ENCODE measurements at regions of chr17 and their contacts with region 1.

Region 1: GRCh38 chr17:48457080-48457836 is 27.2 kb upstream of the SKAP1 start:
- DNase-seq: peak; percentile 93
- H3K4me3 Mint-ChIP-seq: peak overlapping the region; percentile 53
- H3K27ac Mint-ChIP-seq: peak overlapping the region; percentile 17
- H3K4me1 Mint-ChIP-seq: peaks cover 53% of the 10 kb centered on the region
- H3K27me3 Mint-ChIP-seq: no peaks in the 10 kb centered on the region

Region 2: GRCh38 chr17:48335858-48336500 is 121.3 kb before region 1 on chr17:
- intact Hi-C with region 1: loop called (anchors 2 kb)
- DNase-seq: peak; percentile 72
- H3K4me3 Mint-ChIP-seq: no peak overlapping the region
- H3K27ac Mint-ChIP-seq: no peak overlapping the region
- H3K4me1 Mint-ChIP-seq: peaks cover 12% of the 10 kb centered on the region
- H3K27me3 Mint-ChIP-seq: no peaks in the 10 kb centered on the region

Region 3: DNA sequence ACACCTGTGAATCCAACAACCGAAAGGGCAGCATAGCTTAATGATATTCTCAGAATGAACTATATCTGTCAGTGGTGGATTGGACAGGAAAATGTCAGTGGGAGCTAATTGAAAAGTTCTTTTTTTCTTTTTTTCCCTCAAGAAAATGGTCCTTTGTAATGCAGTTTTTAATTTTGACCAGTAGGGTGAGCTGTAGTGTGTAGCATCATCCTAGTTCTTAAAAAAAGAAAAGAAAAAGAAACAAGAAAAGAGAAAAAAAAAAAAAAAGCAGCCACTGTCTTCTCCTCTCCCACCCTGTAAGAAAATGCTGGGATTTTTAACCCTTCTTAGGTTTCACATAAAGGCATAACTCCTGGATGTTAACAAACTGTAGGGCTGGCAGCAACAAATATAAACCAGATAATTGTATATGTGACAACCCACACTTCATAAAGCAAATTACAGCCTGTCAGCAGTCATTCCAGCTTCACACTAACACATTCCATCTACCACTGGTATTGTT is 105.4 kb before region 1 on chr17:
- intact Hi-C with region 1: loop called (anchors 1 kb)
- DNase-seq: no peak
- H3K4me3 Mint-ChIP-seq: no peak overlapping the region
- H3K27ac Mint-ChIP-seq: no peak overlapping the region
- H3K4me1 Mint-ChIP-seq: peaks cover 6% of the 10 kb centered on the region
- H3K27me3 Mint-ChIP-seq: no peaks in the 10 kb centered on the region

Region 4: GRCh38 chr17:48429638-48430586 is 27.3 kb before region 1 on chr17 and contains the start of gene SKAP1:
- intact Hi-C with region 1: loop called (anchors 1 kb)
- DNase-seq: peak; percentile 93
- H3K4me3 Mint-ChIP-seq: peak within 1 kb of the TSS; percentile 99
- H3K27ac Mint-ChIP-seq: peak within 1 kb of the TSS; percentile 99
- H3K4me1 Mint-ChIP-seq: peaks cover 64% of the 10 kb centered on the region
- H3K27me3 Mint-ChIP-seq: no peaks in the 10 kb centered on the region
- total RNA-seq, gene SKAP1: 59.3 and 63.1 TPM in 2 replicates

Region 5: GRCh38 chr17:48441231-48441711 is 16.0 kb before region 1 on chr17:
- intact Hi-C with region 1: loop called (anchors 1 kb)
- DNase-seq: peak; percentile 86
- H3K4me3 Mint-ChIP-seq: peak overlapping the region; percentile 51
- H3K27ac Mint-ChIP-seq: peak overlapping the region; percentile 95
- H3K4me1 Mint-ChIP-seq: peaks cover 83% of the 10 kb centered on the region
- H3K27me3 Mint-ChIP-seq: no peaks in the 10 kb centered on the region

Measured in activated CD4-positive, alpha-beta T cell treated with anti-CD3 and anti-CD28 coated beads, Interleukin-2, amount 10 ng/mL, durations not matched to agents 24 days and 14 days (primary cell).